Dendritic cell treated with granulocyte-macrophage colony-stimulating factor and Interleukin-4, amounts not matched to agents 40 ng/mL and 50 ng/mL, for 4 days (primary cell): ENCODE measurements at regions of chr1 and their contacts with region 1.

Region 1: DNA sequence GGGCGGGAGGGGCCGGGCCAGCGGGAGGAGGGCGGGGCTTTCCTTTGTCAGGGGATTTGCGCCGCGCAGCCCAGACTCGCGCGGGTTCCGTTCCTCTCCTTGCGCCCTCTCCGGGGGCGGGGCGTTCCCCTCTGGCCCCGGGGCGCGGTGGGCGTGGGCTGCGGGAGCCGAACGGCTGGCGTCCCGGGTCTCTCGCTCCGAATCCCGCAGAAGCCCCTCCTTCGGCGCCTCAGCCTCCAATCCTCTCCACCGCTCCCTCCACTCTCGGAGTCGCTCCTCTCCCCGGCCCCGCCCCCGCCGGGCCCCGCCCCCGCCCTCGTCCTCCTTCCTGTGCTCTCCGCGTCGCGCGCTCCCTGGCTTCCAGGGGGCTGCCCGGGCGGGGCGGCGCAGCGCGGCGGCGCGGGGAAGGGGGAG is 82.8 kb upstream of the BMP8A start:
- H3K4me3 Mint-ChIP-seq: peak overlapping the region; percentile 84
- H3K27ac Mint-ChIP-seq: peak overlapping the region; percentile 78
- H3K4me1 Mint-ChIP-seq: peaks cover 59% of the 10 kb centered on the region
- H3K27me3 Mint-ChIP-seq: no peaks in the 10 kb centered on the region

Region 2: GRCh38 chr1:39398278-39399021 is 10.2 kb before region 1 on chr1:
- intact Hi-C with region 1: loop called (anchors 1 kb)
- H3K4me3 Mint-ChIP-seq: no peak overlapping the region
- H3K27ac Mint-ChIP-seq: peak overlapping the region; percentile 70
- H3K4me1 Mint-ChIP-seq: peaks cover 63% of the 10 kb centered on the region
- H3K27me3 Mint-ChIP-seq: no peaks in the 10 kb centered on the region